ENCODE measurements at regions of chr4 and their contacts with region 1.

Region 1: GRCh38 chr4:172040766-172041165 is 227.6 kb downstream of the GALNTL6 start:
- DNase-seq: no peak
- ATAC-seq: no peak
- H3K4me3 ChIP-seq: no peak overlapping the region
- H3K27ac ChIP-seq: no peak overlapping the region
- H3K4me1 ChIP-seq: no peaks in the 10 kb centered on the region
- H3K27me3 ChIP-seq: no peaks in the 10 kb centered on the region
- CTCF ChIP-seq: no peak

Region 2: DNA sequence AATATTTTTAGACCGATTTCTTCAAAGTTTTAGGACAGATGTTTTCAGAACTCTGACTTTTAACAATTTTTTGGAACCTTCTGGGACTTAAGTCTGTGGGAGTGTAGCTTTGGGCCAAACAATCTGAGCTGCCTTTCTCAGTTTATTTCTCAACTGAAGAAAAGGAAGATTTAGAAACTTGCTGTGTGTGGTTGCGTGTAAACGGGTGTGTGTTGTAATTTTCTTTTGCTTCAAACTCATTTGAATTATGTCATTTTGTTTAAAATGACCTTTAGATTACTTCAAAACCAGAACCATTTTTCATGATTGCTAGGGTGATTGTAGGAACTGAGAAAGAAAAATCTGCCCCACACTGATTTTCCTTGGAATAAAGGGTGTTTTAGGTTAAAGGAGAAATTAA is 805.2 kb before region 1 on chr4:
- intact Hi-C with region 1: no loop called
- DNase-seq: no peak
- ATAC-seq: no peak
- H3K4me3 ChIP-seq: no peak overlapping the region
- H3K27ac ChIP-seq: no peak overlapping the region
- H3K4me1 ChIP-seq: no peaks in the 10 kb centered on the region
- H3K27me3 ChIP-seq: no peaks in the 10 kb centered on the region
- CTCF ChIP-seq: no peak

Region 3: GRCh38 chr4:171993247-171993646 is 47.5 kb before region 1 on chr4:
- intact Hi-C with region 1: loop called in 1 of 10 experiments (anchors 2 kb)
- DNase-seq: no peak
- ATAC-seq: no peak
- H3K4me3 ChIP-seq: no peak overlapping the region
- H3K27ac ChIP-seq: no peak overlapping the region
- H3K4me1 ChIP-seq: no peaks in the 10 kb centered on the region
- H3K27me3 ChIP-seq: no peaks in the 10 kb centered on the region
- CTCF ChIP-seq: no peak

Measured in heart right ventricle (tissue), 16 donors.